ENCODE measurements at regions of chr3 and their contacts with region 1.

Region 1: GRCh38 chr3:49021813-49022687 is at the start of gene NDUFAF3:
- DNase-seq: peak; percentile 87 to 95
- H3K4me3 ChIP-seq: peak within 1 kb of the TSS; percentile 72 to 97
- H3K27ac ChIP-seq: peak within 1 kb of the TSS; percentile 97 to 98
- H3K4me1 ChIP-seq: peaks cover 0 to 48% (median 39%) of the 10 kb centered on the region in 4 donors
- H3K27me3 ChIP-seq: no peaks in the 10 kb centered on the region
- CTCF ChIP-seq: peak; percentile 98 to 99

Region 2: GRCh38 chr3:48989796-48990635 is 32.0 kb before region 1 on chr3 and contains the start of gene P4HTM:
- intact Hi-C with region 1: loop called (anchors 5 kb)
- DNase-seq: peak; percentile 90 to 95
- H3K4me3 ChIP-seq: peak within 1 kb of the TSS; percentile 69 to 84
- H3K27ac ChIP-seq: peak within 1 kb of the TSS; percentile 89 to 96
- H3K4me1 ChIP-seq: peaks cover 7 to 36% (median 22%) of the 10 kb centered on the region in 4 donors
- H3K27me3 ChIP-seq: no peaks in the 10 kb centered on the region
- CTCF ChIP-seq: peak; percentile 32 to 36